ENCODE measurements at regions of chr18 and their contacts with region 1.

Region 1: GRCh38 chr18:13800505-13801259 is 23.3 kb upstream of the MC5R start:
- DNase-seq: peak; percentile 80
- ATAC-seq: peak; percentile 99
- H3K4me3 Mint-ChIP-seq: peak overlapping the region; percentile 48
- H3K27ac Mint-ChIP-seq: no peak overlapping the region
- H3K4me1 Mint-ChIP-seq: peaks cover 5% of the 10 kb centered on the region
- H3K27me3 Mint-ChIP-seq: peaks cover 51% of the 10 kb centered on the region

Region 2: GRCh38 chr18:13289481-13290205 is 511.0 kb before region 1 on chr18:
- CTCF ChIA-PET with region 1: no interaction called
- POLR2A ChIA-PET with region 1: no interaction called
- intact Hi-C with region 1: no loop called
- DNase-seq: no peak
- ATAC-seq: no peak
- H3K4me3 Mint-ChIP-seq: no peak overlapping the region
- H3K27ac Mint-ChIP-seq: peak overlapping the region; percentile 48
- H3K4me1 Mint-ChIP-seq: peaks cover 52% of the 10 kb centered on the region
- H3K27me3 Mint-ChIP-seq: no peaks in the 10 kb centered on the region

Region 3: GRCh38 chr18:13608810-13609532 is 191.7 kb before region 1 on chr18:
- CTCF ChIA-PET with region 1: no interaction called
- POLR2A ChIA-PET with region 1: no interaction called
- intact Hi-C with region 1: no loop called
- DNase-seq: peak; percentile 70
- ATAC-seq: peak; percentile 66
- H3K4me3 Mint-ChIP-seq: peak overlapping the region; percentile 36
- H3K27ac Mint-ChIP-seq: peak overlapping the region; percentile 75
- H3K4me1 Mint-ChIP-seq: peaks cover 58% of the 10 kb centered on the region
- H3K27me3 Mint-ChIP-seq: no peaks in the 10 kb centered on the region

Region 4: DNA sequence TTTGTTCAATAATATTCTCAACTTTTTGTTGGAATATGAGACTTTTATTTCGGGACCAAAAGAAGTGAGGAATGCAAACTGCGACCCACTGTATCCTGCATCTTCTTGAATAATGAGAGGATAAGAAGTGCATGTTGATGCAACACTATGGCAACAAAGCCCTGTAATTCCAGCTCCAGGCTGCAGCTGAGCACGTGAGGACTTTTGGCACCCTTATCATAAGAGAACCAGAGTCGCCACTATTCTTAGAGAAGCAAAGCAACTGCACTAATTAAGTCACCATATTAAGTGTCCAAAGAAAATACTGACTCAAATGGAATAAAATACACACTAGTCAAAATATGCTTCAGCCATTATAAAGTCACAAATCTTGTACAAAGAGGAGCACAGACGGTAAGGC is 140.2 kb before region 1 on chr18:
- CTCF ChIA-PET with region 1: no interaction called
- POLR2A ChIA-PET with region 1: no interaction called
- intact Hi-C with region 1: loop called in 1 of 2 experiments (anchors 10 kb)
- DNase-seq: no peak
- ATAC-seq: no peak
- H3K4me3 Mint-ChIP-seq: no peak overlapping the region
- H3K27ac Mint-ChIP-seq: no peak overlapping the region
- H3K4me1 Mint-ChIP-seq: peaks cover 7% of the 10 kb centered on the region
- H3K27me3 Mint-ChIP-seq: no peaks in the 10 kb centered on the region

Region 5: GRCh38 chr18:13746633-13747032 is 54.0 kb before region 1 on chr18:
- CTCF ChIA-PET with region 1: interaction called, 3 read pairs
- POLR2A ChIA-PET with region 1: interaction called, 5 read pairs
- intact Hi-C with region 1: loop called (anchors 5 to 10 kb)
- DNase-seq: no peak
- ATAC-seq: no peak
- H3K4me3 Mint-ChIP-seq: no peak overlapping the region
- H3K27ac Mint-ChIP-seq: no peak overlapping the region
- H3K4me1 Mint-ChIP-seq: no peaks in the 10 kb centered on the region
- H3K27me3 Mint-ChIP-seq: no peaks in the 10 kb centered on the region

Region 6: DNA sequence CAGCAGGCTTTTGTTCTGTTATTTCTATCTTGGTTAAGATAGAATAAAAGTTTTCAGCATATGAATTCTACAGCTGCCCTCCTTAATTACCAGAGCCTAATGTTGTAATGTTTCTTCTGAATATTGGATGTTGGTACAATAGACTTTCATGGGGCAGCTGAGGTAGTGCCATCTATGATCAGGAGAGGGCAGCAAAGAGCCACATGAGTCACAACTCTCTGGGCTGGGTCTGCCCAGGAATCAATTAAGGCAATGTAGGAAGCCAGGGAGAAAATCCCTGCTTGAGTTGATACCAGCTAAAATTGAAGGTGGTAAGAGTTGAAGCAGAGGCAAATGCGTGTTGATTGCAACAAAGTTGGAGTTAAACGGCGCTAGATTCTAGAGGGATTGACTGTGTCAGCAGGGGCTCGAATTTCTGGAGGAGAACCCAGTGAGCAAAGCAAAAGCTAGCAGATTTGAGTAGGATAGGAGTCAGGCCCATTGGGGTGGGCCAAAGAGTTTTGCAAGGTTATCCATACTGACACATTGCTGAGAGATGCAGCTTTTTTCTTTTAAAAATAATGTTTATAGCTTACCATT is 12.7 kb after region 1 on chr18:
- CTCF ChIA-PET with region 1: interaction called, 28 read pairs
- POLR2A ChIA-PET with region 1: interaction called, 3 read pairs
- intact Hi-C with region 1: no loop called
- DNase-seq: peak; percentile 74
- ATAC-seq: peak; percentile 91
- H3K4me3 Mint-ChIP-seq: no peak overlapping the region
- H3K27ac Mint-ChIP-seq: no peak overlapping the region
- H3K4me1 Mint-ChIP-seq: no peaks in the 10 kb centered on the region
- H3K27me3 Mint-ChIP-seq: peaks cover 2% of the 10 kb centered on the region

Region 7: GRCh38 chr18:13849526-13850170 is 49.0 kb after region 1 on chr18:
- CTCF ChIA-PET with region 1: no interaction called
- POLR2A ChIA-PET with region 1: no interaction called
- intact Hi-C with region 1: loop called in 1 of 2 experiments (anchors 10 kb)
- DNase-seq: no peak
- ATAC-seq: no peak
- H3K4me3 Mint-ChIP-seq: no peak overlapping the region
- H3K27ac Mint-ChIP-seq: no peak overlapping the region
- H3K4me1 Mint-ChIP-seq: no peaks in the 10 kb centered on the region
- H3K27me3 Mint-ChIP-seq: peaks cover 4% of the 10 kb centered on the region

Measured in activated CD4-positive, alpha-beta T cell treated with anti-CD3 and anti-CD28 coated beads for 36 hours (primary cell).